ENCODE measurements at regions of chr13 and their contacts with region 1.

Region 1: DNA sequence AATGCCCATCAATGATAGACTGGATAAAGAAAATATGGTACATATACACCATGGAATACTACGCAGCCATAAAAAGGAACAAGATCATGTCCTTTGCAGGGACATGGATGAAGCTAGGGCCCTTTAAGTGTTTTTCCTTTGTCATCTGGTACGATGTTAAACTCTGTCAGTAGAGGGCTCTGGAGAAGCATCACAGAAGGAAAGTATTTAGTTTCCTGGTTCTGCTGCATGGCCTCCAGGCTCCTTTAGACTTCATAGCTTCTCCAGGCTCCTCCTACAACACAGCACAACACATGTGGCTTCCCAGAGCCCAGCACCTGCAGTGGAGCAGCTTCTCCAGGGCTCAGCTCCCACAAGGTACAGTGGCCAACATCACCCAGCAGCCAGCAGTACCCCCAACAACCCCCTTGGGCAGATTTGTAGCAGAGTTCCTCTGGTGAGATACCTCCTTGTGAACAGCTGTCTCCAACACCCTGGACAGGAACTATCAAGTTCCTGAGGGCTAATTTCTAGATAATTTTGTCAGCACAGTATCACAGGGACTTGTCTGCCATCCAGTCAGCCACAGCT is 63.4 kb downstream of the KCTD12 start:
- DNase-seq: peak; percentile 53
- ATAC-seq: peak; percentile 79
- H3K4me3 ChIP-seq: no peak overlapping the region
- H3K27ac ChIP-seq: no peak overlapping the region
- H3K4me1 ChIP-seq: no peaks in the 10 kb centered on the region
- H3K27me3 ChIP-seq: no peaks in the 10 kb centered on the region
- CTCF ChIP-seq: peak; percentile 47

Region 2: DNA sequence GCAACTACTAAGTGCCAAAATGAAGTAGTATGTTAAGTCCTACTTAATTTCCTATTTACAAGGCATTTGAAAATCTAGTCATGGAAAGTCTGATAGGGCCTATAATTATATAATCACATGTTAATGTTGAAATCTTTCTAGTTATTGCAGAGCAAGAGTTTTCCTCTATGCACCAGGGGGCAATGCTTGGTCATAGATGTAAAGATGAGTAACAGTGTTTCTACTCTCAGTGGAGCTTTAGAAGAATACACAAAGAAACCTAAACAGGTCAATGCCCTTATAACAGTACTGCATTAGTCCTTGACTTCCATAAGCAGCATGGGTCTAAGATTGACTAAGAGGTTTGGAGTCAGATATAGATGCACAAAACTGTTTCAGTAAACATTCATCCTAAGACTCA is 155.2 kb before region 1 on chr13:
- CTCF ChIA-PET with region 1: no interaction called
- POLR2A ChIA-PET with region 1: no interaction called
- intact Hi-C with region 1: loop called (anchors 5 kb)
- DNase-seq: peak; percentile 27
- ATAC-seq: peak; percentile 57
- H3K4me3 ChIP-seq: no peak overlapping the region
- H3K27ac ChIP-seq: no peak overlapping the region
- H3K4me1 ChIP-seq: no peaks in the 10 kb centered on the region
- H3K27me3 ChIP-seq: peaks cover 21% of the 10 kb centered on the region
- CTCF ChIP-seq: peak; percentile 53

Region 3: DNA sequence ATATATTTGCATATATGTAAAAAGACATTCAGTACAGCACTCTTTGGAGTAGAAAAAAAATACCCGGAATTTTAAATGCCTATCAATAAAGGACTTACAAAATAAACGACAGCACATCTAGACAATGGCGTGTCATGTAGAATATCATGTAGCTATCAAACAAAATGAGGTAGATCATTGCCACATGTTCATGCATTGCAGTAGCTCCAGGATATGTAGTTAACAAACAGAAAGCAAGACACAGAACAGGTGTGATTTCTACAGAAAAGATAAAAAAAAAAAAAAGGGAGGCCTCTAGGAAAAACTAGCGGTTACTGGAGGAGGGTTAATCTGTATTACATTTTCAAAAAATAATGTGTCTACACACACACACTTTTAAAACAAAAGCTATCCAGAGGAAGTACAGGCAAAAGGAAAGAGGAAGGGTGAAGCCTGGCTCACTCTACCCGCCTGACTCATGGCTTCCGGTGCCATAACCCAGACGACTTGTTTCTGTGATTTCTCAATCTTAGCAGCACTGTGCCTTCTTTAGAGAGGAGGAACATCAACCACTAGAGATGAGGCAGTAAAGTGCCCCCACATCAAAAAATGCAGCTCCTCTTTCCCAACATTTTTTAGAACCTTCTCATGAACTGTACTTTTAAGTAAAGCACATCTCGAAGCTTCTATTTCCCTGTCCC is 56.6 kb after region 1 on chr13:
- CTCF ChIA-PET with region 1: no interaction called
- POLR2A ChIA-PET with region 1: interaction called, 10 read pairs
- intact Hi-C with region 1: no loop called
- DNase-seq: peak; percentile 65
- ATAC-seq: peak; percentile 98
- H3K4me3 ChIP-seq: no peak overlapping the region
- H3K27ac ChIP-seq: peak overlapping the region; percentile 43
- H3K4me1 ChIP-seq: peaks cover 21% of the 10 kb centered on the region
- H3K27me3 ChIP-seq: no peaks in the 10 kb centered on the region
- CTCF ChIP-seq: no peak

Region 4: GRCh38 chr13:76886292-76887075 is 63.7 kb after region 1 on chr13 and contains the start of gene KCTD12:
- CTCF ChIA-PET with region 1: interaction called, 7 read pairs
- POLR2A ChIA-PET with region 1: no interaction called
- intact Hi-C with region 1: loop called (anchors 1 kb)
- DNase-seq: peak; percentile 67
- ATAC-seq: peak; percentile 74
- H3K4me3 ChIP-seq: peak within 1 kb of the TSS; percentile 80
- H3K27ac ChIP-seq: peak within 1 kb of the TSS; percentile 34; the same call in 1 of the 2 replicates
- H3K4me1 ChIP-seq: peaks cover 14% of the 10 kb centered on the region; the same call in 1 of the 2 replicates
- H3K27me3 ChIP-seq: no peaks in the 10 kb centered on the region
- CTCF ChIP-seq: 0 out of 2 replicates have a peak, but pooled peaks have one; percentile 10
- total RNA-seq, gene KCTD12: 7.0 and 7.8 TPM in 2 replicates

Region 5: DNA sequence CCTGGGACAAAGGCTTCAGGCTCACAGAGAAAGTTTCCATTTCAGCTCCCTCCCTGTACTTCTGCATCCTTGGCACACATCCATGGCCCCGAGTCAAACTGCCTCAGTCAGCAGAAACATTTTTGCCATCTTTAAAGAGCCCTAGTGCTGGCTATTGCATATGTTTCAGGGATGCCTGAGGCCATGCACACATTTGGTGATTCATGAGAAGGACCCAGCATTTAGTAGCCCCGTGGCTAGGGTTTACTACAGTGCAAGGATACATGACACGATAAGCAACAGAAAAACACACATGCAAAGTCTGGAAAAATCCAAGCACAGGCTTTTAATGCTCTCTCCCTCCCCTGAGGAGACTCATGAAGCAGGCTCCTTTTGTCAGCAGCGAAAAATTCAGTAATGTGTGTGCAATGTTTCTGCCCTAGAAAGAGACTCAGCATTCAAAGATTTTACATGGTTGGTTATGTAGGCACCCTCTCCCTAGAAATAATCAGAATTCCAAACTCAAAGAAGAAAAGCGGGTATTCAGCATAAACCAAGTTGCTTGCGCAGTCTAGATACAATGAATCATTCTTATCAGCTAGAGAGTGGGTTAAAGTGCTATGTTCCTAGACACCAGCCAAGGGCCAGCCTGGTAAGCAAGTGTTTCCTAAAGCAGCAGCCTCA is 143.1 kb after region 1 on chr13:
- CTCF ChIA-PET with region 1: no interaction called
- POLR2A ChIA-PET with region 1: no interaction called
- intact Hi-C with region 1: no loop called
- DNase-seq: peak; percentile 18
- ATAC-seq: peak; percentile 31
- H3K4me3 ChIP-seq: no peak overlapping the region
- H3K27ac ChIP-seq: no peak overlapping the region
- H3K4me1 ChIP-seq: no peaks in the 10 kb centered on the region
- H3K27me3 ChIP-seq: no peaks in the 10 kb centered on the region
- CTCF ChIP-seq: no peak

Region 6: DNA sequence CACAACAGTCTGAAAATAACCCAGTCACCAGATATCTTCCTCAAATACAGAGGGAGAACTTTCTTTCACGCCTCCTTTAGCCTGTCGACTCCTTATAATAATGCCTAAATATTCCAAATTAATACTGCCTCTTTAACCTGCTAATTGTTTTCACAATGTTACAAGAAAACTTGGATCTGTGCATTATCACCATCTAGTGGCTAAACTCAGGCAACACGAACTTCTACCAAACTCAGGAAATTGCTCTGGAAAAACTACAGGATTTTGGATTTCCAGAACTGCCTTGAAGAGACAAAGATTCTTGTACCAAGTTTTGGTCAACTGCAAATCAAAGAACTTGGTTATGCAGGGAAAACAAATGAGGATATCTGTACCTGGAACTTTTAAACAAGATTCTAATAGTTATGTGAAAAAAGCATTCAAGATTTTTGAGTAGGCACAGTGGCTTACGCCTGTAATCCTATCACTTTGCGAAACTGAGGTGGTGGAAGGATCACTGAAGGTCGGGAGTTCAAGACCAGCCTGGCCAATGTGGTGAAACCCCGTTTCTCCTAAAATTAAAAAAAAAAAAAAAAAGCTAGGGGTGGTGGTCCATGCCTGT is 179.9 kb after region 1 on chr13:
- CTCF ChIA-PET with region 1: no interaction called
- POLR2A ChIA-PET with region 1: no interaction called
- intact Hi-C with region 1: loop called (anchors 10 kb)
- DNase-seq: peak; percentile 53
- ATAC-seq: peak; percentile 25
- H3K4me3 ChIP-seq: no peak overlapping the region
- H3K27ac ChIP-seq: no peak overlapping the region
- H3K4me1 ChIP-seq: peaks cover 15% of the 10 kb centered on the region
- H3K27me3 ChIP-seq: no peaks in the 10 kb centered on the region
- CTCF ChIP-seq: peak; percentile 74

Measured in PC-3 (cell line).